Esophagus muscularis mucosa (tissue), 4 donors: ENCODE measurements at regions of chr18 and their contacts with region 1.

Region 1: DNA sequence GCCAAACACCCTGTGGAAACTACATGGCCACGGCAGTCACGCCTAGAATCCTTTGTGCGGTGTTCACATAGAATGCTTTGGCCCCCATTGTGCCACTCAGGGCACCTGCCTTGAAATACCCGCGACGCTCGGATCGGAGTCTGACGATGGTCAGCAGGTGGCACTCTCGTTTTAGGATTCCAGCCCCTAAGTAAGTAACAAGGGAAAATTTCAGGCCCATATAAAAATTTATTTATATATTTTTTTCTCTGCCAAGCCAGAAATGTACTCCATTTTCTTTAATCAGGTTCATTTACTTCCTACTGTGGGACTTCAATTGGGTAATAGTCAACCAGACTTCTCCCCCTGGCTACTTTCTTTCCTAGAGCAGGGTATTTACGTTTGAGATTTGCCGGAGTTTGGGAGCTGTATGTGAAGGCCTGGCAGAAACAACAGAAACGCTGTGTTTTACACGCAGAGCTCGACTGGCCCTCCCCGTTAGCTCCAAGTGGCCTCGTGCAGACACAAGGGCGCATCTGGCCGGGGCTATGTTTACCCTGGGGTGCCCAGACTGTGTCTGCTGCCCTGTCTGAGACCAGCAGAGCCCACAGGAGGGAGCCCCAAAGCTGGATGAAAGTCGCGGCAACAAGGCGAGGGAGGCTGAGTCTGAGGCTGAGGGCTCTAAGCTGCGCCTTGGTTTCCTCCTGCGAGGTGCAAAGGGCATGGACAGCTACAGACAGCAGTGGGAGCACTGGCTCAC is 41.6 kb downstream of the LRRC30 start:
- DNase-seq: no peak
- H3K4me3 ChIP-seq: peak overlapping the region; percentile 27 to 49 (median 40)
- H3K27ac ChIP-seq: peak overlapping the region; percentile 79 to 83 (median 80)
- H3K4me1 ChIP-seq: peaks cover 14 to 22% (median 18%) of the 10 kb centered on the region in 4 donors
- H3K27me3 ChIP-seq: no peaks in the 10 kb centered on the region
- CTCF ChIP-seq: peak; percentile 57 to 70 (median 61)
- EP300 ChIP-seq: no peak
- POLR2A ChIP-seq: no peak

Region 2: GRCh38 chr18:7452331-7452730 is 179.9 kb after region 1 on chr18:
- intact Hi-C with region 1: loop called (anchors 10 kb)
- DNase-seq: no peak
- H3K4me3 ChIP-seq: no peak overlapping the region
- H3K27ac ChIP-seq: no peak overlapping the region
- H3K4me1 ChIP-seq: peaks cover 4 to 16% (median 10%) of the 10 kb centered on the region in 4 donors
- H3K27me3 ChIP-seq: no peaks in the 10 kb centered on the region
- CTCF ChIP-seq: peak; percentile 51 to 73 (median 51)
- EP300 ChIP-seq: no peak
- POLR2A ChIP-seq: no peak

Region 3: DNA sequence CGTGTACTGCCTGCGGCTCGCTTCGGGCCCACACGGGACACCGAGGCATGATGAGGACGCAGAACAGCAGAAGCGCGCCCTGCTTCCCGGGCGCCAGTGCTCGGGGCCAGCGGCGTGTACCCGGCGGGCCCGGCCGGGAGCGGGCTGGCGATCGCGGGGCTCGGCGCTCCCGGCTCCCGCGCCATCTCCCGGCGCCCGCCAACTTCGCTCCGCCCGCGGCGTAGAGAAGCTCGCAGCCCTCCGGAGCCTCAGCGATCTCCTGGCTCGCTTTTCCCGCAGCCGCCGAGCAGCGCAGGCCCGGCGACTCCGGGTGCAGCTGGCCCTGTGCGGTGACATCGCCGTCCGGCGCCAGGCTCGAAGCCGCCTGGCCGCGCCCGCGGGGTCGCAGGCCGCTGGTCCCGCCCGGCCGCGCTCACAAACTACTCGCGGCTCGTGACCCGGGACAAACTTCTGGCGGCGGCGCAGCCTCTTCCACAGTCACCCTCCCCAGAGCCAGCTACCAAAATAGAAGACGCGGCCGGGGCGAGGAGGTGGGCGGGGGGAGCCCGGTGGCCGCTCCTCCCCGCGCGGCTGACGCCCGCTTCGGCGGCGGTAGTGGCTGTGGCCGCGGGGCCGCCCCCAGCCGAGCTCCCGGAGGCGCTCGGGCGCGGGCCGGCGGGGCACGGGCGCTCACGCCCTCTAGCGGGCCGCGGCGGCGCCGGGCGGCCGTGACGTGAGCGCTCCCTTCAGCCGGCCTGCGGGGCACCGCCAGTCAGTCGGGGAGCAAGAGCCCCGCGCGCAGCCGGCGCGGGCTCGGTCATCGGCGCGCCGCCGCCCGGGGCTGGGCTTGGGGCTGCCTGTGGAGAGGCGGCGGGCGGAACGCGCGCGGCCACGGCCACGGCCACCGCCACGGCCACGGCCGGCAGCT is 294.3 kb after region 1 on chr18 and contains the start of gene PTPRM:
- intact Hi-C with region 1: loop called (anchors 1 kb)
- DNase-seq: peak; percentile 95
- H3K4me3 ChIP-seq: peak within 1 kb of the TSS; percentile 86 to 93 (median 88)
- H3K27ac ChIP-seq: peak within 1 kb of the TSS; percentile 93 to 99 (median 98)
- H3K4me1 ChIP-seq: peaks cover 32 to 51% (median 39%) of the 10 kb centered on the region in 4 donors
- H3K27me3 ChIP-seq: no peaks in the 10 kb centered on the region
- CTCF ChIP-seq: peak in 2 of 3 experiments; percentile 61 to 83
- EP300 ChIP-seq: no peak
- POLR2A ChIP-seq: peak; percentile 59
- total RNA-seq, gene PTPRM: 62.7 to 94.0 (median 76.0) TPM

Region 4: GRCh38 chr18:7755753-7756475 is 483.4 kb after region 1 on chr18:
- intact Hi-C with region 1: loop called (anchors 10 kb)
- DNase-seq: no peak
- H3K4me3 ChIP-seq: no peak overlapping the region
- H3K27ac ChIP-seq: peak overlapping the region in 1 of 4 donors; percentile 21
- H3K4me1 ChIP-seq: peaks cover 32 to 47% (median 39%) of the 10 kb centered on the region in 4 donors
- H3K27me3 ChIP-seq: no peaks in the 10 kb centered on the region
- CTCF ChIP-seq: peak in 2 of 3 experiments; percentile 21 to 48
- EP300 ChIP-seq: no peak
- POLR2A ChIP-seq: no peak

Region 5: DNA sequence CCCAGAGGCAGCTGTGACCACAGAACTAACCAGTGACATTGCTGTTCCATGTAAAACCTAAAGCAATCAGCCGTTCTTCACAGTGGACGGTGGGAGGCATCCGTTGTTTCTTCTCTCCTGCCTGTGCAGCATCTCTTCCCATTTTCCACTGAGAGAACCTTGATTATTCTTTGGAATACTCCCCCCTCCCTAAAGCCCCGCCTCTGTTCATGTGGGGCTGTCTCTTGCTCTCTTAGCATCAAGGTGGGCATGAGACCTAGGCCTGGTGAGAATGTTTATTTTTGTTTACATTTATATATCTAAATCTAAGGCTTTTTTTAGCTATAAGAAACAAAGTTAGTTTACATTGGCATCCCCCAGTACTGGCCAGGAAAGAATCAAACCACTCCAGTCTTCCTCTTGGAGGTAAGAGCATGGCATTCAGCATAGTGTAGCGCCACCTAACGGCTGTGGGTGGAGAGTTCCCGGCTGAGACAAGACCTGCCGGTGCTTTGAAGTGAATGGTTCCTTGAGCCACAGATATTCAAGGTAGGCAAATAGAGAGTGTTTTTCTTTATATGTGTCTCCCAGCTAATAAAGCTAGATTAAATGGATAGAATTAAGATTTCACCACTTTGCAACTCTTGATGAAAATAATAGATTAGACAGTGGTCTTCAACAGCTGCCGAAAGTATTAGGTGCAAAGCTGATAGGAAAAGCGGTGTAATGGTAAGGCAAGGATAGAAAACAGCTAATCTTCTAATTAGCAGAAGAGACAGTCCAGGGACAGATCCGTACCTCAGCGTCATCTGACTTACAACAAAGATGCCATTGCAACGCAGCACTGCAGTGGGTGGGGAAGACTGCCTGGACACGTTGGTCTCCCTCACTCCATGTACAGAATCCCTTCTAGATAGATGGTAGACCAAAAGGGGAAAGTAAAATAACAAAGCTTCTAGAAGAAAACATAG is 1117.2 kb after region 1 on chr18:
- intact Hi-C with region 1: loop called (anchors 10 kb)
- DNase-seq: no peak
- H3K4me3 ChIP-seq: no peak overlapping the region
- H3K27ac ChIP-seq: no peak overlapping the region
- H3K4me1 ChIP-seq: no peaks in the 10 kb centered on the region
- H3K27me3 ChIP-seq: no peaks in the 10 kb centered on the region
- CTCF ChIP-seq: peak; percentile 62 to 73 (median 66)
- EP300 ChIP-seq: no peak
- POLR2A ChIP-seq: no peak